Calu3 (cell line): ENCODE measurements at regions of chr7 and their contacts with region 1.

Region 1: DNA sequence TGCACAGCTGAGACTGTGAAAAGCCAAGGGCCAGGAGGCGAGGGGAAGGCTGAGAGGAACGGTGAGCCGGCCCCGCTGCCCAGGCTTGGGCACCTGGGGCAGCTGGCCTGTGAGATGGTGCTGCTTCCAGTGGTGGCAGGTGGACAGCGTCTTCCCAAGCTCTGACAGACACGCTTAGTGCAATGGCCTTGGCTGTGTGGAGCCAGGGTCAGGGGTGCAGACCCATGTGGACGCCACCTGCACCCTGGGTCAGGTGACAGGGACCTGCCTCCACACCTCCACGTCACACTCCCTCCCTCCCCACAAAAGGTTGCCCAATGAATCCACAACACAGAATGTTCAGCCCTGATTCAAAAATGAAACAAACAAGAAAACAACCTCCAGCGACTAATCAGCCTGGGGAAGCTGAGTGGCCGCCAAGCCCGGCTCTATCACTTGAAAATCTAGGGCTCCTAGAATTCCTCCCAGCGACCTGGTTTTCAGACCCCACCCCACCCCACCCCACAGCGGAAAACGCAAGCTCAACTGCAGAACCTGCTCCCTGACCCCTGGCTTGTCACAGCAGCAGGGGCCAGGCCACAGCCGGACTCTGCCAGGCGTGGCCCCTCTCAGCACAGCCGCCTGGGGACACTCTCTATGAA is 54.3 kb downstream of the PRKAG2 start:
- DNase-seq: no peak
- H3K4me3 Mint-ChIP-seq: no peak overlapping the region
- H3K27ac Mint-ChIP-seq: no peak overlapping the region
- H3K4me1 Mint-ChIP-seq: peaks cover 13% of the 10 kb centered on the region
- H3K27me3 Mint-ChIP-seq: peaks cover 39% of the 10 kb centered on the region
- CTCF ChIP-seq: no peak

Region 2: DNA sequence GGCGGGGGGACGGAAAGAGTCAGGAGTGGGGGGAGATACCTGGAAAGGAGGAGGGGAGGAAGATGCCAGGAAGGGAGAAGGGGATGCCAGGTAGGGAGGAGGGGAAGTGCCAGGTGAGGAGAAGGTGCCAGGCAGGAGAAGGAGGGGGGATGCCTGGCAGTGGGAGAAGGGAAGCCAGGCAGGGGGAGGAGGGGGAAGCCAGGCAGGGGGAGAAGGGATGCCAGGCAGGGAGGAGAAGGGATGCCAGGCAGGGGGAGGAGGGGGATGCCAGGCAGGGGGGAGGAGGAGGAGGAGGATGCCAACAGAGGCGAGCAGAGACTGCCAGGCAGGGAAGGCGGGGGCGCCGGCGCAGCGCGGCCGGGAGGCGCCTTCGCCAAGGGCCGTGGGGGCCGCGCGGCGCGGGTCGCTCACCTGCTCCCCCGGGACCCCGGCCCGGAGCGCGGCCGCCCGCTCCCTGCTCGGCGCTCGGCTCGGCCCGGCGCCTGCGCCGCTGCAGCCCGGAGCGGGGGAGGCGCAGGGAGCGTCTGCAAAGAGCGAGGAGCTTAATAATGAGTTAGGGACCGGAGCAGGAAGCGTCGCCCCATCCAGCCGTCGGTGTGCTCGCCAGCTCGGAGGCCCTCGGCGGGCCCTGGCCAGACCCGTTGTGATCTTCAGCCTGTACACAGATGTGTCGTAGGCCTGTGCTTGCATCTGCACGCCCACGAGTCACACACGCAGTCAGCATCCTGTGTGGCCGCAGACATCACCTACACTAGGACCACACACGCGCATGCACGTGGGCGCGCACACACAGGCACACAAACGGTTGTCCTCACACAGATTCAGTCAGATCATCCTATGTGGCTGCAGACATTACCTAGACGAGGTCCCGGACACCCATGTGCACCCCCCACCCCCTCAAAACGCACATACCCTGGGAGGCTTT is 545.7 kb before region 1 on chr7:
- CTCF ChIA-PET with region 1: interaction called, 11 read pairs
- intact Hi-C with region 1: no loop called
- DNase-seq: peak; percentile 39
- H3K4me3 Mint-ChIP-seq: peak overlapping the region; percentile 44
- H3K27ac Mint-ChIP-seq: no peak overlapping the region
- H3K4me1 Mint-ChIP-seq: no peaks in the 10 kb centered on the region
- H3K27me3 Mint-ChIP-seq: peaks cover 88% of the 10 kb centered on the region
- CTCF ChIP-seq: no peak

Region 3: DNA sequence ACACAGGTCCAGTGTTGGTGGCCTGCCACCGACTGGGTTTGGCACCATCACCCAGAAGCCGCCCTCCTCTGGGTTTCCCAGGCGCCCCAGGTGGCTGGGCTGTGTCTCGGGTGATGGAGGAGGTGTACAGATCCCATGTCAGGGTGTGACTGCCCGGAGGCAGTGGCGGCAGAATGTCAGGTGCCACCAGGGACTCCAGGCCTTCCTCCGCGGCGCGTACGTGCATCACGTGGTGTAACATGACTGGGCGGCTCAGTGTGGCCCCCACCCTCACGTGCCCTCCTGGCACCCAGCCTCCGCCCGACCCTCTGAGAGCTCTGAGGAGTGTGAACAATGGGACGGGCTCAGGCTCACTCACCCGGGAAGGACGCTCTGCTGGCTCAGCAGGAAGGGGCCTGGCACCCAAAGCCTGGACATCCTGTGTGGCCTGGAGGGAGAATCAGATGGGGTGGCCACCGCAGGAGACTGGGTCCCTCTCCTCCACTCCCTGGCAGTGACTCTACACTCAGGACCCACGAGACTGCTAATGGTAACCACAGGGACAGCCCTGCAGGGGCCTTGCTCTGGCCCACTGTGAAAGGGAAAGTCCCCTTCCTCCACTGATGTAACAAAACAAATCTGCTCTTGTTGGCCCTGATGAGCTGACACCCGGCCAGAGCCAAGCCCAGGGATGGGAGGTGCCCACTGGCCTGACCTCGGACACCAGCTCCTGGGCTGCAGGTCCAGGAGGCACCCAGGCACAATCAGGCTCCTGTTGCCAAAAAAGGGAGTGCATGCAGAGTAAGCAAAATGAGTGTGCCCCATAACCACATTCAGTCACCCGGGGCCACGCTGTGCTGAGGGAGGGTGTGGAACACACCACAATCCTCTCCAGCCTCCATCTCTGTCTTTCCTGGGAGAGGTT is 110.5 kb before region 1 on chr7:
- CTCF ChIA-PET with region 1: no interaction called
- intact Hi-C with region 1: no loop called
- DNase-seq: no peak
- H3K4me3 Mint-ChIP-seq: no peak overlapping the region
- H3K27ac Mint-ChIP-seq: peak overlapping the region; percentile 34
- H3K4me1 Mint-ChIP-seq: peaks cover 40% of the 10 kb centered on the region
- H3K27me3 Mint-ChIP-seq: no peaks in the 10 kb centered on the region
- CTCF ChIP-seq: no peak